ENCODE measurements at regions of chr16 and their contacts with region 1.

Region 1: GRCh38 chr16:62130101-62130500 is 93.9 kb upstream of the CDH8 start:
- DNase-seq: no peak
- H3K4me3 Mint-ChIP-seq: no peak overlapping the region
- H3K27ac Mint-ChIP-seq: no peak overlapping the region
- H3K4me1 Mint-ChIP-seq: no peaks in the 10 kb centered on the region
- H3K27me3 Mint-ChIP-seq: peaks cover 3% of the 10 kb centered on the region

Region 2: GRCh38 chr16:60907645-60908044 is 1222.5 kb before region 1 on chr16:
- CTCF ChIA-PET with region 1: no interaction called
- intact Hi-C with region 1: loop called (anchors 5 kb)
- DNase-seq: no peak
- H3K4me3 Mint-ChIP-seq: no peak overlapping the region
- H3K27ac Mint-ChIP-seq: no peak overlapping the region
- H3K4me1 Mint-ChIP-seq: no peaks in the 10 kb centered on the region
- H3K27me3 Mint-ChIP-seq: no peaks in the 10 kb centered on the region

Region 3: DNA sequence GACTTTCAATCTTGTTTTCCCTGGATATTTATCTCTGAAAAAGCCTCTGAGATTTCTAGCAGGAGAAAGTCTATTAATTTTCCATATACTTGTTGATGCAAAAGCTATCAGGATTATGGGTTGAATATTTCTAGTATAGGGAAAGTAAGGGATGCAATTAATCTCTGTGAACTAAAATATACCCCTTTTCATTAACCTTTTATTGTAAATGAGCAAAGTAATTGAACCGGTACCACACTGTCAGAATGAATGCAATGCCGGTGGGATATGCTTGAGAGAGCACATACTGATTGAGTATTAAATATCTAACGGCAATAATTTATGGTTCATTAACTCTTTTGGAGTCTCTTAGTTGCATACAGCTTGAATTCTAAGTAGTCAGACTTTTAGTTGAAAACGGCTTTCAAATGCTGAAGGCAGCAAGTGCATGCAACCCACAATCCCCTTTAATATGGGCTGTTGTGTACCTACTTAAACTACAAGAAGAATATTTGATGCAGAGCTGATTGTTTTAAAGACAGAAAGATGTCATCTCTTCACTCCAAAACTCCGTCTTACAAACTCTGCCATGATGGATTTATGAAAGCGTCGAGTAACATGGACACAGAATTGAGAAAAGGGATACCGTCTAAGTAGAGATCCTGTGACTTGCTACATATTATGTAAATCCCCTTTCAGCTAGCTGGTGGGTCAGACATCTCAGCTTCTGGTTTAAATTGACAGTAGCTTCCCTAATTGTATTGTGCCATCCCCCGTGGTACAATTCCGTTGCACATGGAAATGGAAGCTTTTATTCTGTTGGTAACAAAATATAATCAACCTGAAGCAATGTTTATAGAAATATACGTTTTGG is 47.5 kb after region 1 on chr16:
- CTCF ChIA-PET with region 1: no interaction called
- intact Hi-C with region 1: no loop called
- DNase-seq: no peak
- H3K4me3 Mint-ChIP-seq: no peak overlapping the region
- H3K27ac Mint-ChIP-seq: no peak overlapping the region
- H3K4me1 Mint-ChIP-seq: no peaks in the 10 kb centered on the region
- H3K27me3 Mint-ChIP-seq: no peaks in the 10 kb centered on the region

Region 4: DNA sequence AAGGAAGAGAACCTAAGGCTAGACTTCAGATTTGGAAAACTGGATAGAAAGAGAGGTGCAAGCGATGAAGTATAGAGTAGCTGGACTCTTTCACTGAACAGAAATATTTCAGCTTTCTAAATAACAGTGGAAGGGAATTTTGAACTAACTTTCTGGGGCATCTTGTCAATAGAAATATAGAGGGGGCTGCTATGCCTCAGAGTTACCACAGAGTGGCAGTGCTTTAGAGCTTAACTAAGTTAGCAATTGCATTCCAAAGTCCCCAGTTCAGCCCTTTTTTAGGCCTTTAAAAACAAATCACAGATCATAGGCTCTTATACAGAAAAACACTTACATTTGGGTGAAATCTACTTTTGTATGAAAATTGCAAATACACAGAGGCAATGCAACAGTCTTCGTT is 60.3 kb after region 1 on chr16:
- CTCF ChIA-PET with region 1: no interaction called
- intact Hi-C with region 1: no loop called
- DNase-seq: no peak
- H3K4me3 Mint-ChIP-seq: no peak overlapping the region
- H3K27ac Mint-ChIP-seq: no peak overlapping the region
- H3K4me1 Mint-ChIP-seq: no peaks in the 10 kb centered on the region
- H3K27me3 Mint-ChIP-seq: no peaks in the 10 kb centered on the region